K562 (cell line): ENCODE measurements at regions of chr6 and their contacts with region 1.

Region 1: DNA sequence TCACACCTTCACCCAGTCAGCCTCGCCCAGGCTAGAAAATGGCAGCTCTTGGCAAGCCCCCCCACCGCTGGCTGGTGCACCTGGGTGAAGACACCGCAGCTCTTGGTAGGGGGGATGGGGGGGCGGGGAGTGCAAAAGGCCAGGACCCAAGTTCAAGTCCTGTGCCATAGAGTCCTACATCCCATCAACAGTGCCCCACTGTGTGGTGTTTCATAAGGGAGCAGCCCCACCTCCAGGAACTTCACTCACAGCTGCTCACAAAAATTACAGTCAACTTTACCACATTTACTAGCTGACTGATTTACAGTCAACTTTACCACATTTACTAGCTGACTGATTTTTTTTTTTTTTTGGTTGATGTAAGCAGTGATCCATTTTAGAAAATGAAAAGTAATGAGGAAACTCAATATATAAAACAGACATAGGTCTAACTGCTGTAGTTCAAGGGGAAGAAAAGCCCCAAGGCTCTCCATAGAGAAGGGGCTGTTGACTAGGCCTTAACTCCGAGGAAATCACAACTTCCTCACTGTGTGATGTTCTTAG is 208.9 kb upstream of the SNX9 start:
- DNase-seq: no peak
- ATAC-seq: peak; percentile 65
- H3K4me3 ChIP-seq: no peak overlapping the region
- H3K27ac ChIP-seq: no peak overlapping the region
- H3K4me1 ChIP-seq: peaks cover 7 to 18% of the 10 kb centered on the region in 2 experiments; a peak in 4 of 5 replicates
- H3K27me3 ChIP-seq: no peaks in the 10 kb centered on the region
- CTCF ChIP-seq: peak; percentile 11 to 43 (median 31); a peak in 3 of 6 replicates
- EP300 ChIP-seq: no peak
- POLR2A ChIP-seq: no peak
- RAD21 ChIP-seq: peak; percentile 36 to 47; a peak in 3 of 4 replicates

Region 2: DNA sequence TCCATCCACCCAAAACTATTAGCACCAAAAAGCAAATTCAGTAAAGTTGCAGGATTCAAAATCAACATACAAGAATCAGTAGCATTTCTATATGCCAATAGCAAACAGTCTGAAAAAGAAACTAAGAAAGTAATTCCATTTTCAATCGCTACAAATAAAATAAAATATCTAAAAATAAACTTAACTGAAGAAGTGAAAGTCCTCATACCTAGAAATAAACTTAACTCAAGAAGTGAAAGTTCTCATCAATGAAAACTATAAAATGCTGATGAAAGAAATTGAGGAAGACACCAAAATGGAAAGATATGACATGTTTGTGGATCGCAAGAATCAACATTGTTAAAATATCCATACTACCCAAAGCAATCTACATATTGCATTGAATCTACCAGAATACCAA is 939.9 kb before region 1 on chr6:
- CTCF ChIA-PET with region 1: no interaction called
- POLR2A ChIA-PET with region 1: no interaction called
- in situ Hi-C with region 1: no loop called
- intact Hi-C with region 1: no loop called
- DNase-seq: no peak
- ATAC-seq: no peak
- H3K4me3 ChIP-seq: no peak overlapping the region
- H3K27ac ChIP-seq: no peak overlapping the region
- H3K4me1 ChIP-seq: no peaks in the 10 kb centered on the region
- H3K27me3 ChIP-seq: peaks cover 9 to 19% of the 10 kb centered on the region in 2 experiments; a peak in 3 of 5 replicates
- CTCF ChIP-seq: no peak
- EP300 ChIP-seq: no peak
- POLR2A ChIP-seq: no peak
- RAD21 ChIP-seq: no peak

Region 3: GRCh38 chr6:157323255-157323965 is 290.7 kb before region 1 on chr6 and contains the start of gene TMEM242:
- CTCF ChIA-PET with region 1: no interaction called
- POLR2A ChIA-PET with region 1: interaction called, 5 read pairs
- in situ Hi-C with region 1: no loop called
- intact Hi-C with region 1: loop called (anchors 5 kb)
- DNase-seq: peak; percentile 87 to 97 (median 90)
- ATAC-seq: peak; percentile 92
- H3K4me3 ChIP-seq: peak within 1 kb of the TSS; percentile 66
- H3K27ac ChIP-seq: peak within 1 kb of the TSS; percentile 85
- H3K4me1 ChIP-seq: peaks cover 8 to 19% of the 10 kb centered on the region in 2 experiments
- H3K27me3 ChIP-seq: no peaks in the 10 kb centered on the region
- CTCF ChIP-seq: no peak
- EP300 ChIP-seq: peak; percentile 61
- POLR2A ChIP-seq: peak; percentile 100
- RAD21 ChIP-seq: peak in 1 of 2 experiments; percentile 44; a peak in 3 of 4 replicates
- polyA plus RNA-seq, gene TMEM242: 24.3 to 35.3 TPM

Region 4: GRCh38 chr6:157554747-157555146 is 59.4 kb before region 1 on chr6:
- CTCF ChIA-PET with region 1: no interaction called
- POLR2A ChIA-PET with region 1: no interaction called
- in situ Hi-C with region 1: no loop called
- intact Hi-C with region 1: no loop called
- DNase-seq: no peak
- ATAC-seq: no peak
- H3K4me3 ChIP-seq: no peak overlapping the region
- H3K27ac ChIP-seq: no peak overlapping the region
- H3K4me1 ChIP-seq: peaks cover 0 to 7% of the 10 kb centered on the region in 2 experiments; a peak in 1 of 5 replicates
- H3K27me3 ChIP-seq: no peaks in the 10 kb centered on the region
- CTCF ChIP-seq: no peak
- EP300 ChIP-seq: no peak
- POLR2A ChIP-seq: no peak
- RAD21 ChIP-seq: no peak

Region 5: DNA sequence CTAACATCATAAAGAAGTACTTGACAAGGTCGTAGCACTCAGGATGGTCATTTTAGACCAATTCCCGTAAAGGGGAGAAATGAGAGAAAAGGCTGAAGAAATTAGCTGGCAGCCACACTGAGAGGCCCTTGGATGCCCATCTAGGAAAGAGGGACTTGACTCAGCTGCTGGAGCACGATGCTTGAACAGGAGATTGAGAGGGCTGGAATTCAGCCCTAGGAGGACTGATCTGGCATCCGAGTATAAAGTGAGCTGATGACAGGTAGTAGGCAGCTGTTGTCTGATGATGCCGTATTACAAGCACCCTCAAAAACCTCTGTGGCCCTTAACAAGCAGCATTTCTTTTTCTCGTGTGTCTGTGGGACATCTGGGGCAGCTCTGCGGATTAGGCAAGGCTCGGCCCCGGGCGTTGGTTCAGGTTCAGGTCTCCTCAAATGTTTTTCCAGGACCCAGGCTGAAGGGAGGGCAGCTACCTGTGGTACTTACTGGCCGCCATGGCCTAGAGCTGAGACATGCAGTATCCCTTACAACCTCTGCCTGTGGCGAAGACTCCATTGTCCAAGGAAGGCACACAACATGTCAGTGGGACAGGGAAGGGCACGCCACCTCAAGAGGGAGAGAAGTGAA is 10.7 kb before region 1 on chr6:
- CTCF ChIA-PET with region 1: no interaction called
- POLR2A ChIA-PET with region 1: interaction called, 11 read pairs
- in situ Hi-C with region 1: no loop called
- intact Hi-C with region 1: no loop called
- DNase-seq: no peak
- ATAC-seq: no peak
- H3K4me3 ChIP-seq: no peak overlapping the region
- H3K27ac ChIP-seq: no peak overlapping the region
- H3K4me1 ChIP-seq: no peaks in the 10 kb centered on the region
- H3K27me3 ChIP-seq: no peaks in the 10 kb centered on the region
- CTCF ChIP-seq: no peak
- EP300 ChIP-seq: no peak
- POLR2A ChIP-seq: no peak
- RAD21 ChIP-seq: no peak

Region 6: DNA sequence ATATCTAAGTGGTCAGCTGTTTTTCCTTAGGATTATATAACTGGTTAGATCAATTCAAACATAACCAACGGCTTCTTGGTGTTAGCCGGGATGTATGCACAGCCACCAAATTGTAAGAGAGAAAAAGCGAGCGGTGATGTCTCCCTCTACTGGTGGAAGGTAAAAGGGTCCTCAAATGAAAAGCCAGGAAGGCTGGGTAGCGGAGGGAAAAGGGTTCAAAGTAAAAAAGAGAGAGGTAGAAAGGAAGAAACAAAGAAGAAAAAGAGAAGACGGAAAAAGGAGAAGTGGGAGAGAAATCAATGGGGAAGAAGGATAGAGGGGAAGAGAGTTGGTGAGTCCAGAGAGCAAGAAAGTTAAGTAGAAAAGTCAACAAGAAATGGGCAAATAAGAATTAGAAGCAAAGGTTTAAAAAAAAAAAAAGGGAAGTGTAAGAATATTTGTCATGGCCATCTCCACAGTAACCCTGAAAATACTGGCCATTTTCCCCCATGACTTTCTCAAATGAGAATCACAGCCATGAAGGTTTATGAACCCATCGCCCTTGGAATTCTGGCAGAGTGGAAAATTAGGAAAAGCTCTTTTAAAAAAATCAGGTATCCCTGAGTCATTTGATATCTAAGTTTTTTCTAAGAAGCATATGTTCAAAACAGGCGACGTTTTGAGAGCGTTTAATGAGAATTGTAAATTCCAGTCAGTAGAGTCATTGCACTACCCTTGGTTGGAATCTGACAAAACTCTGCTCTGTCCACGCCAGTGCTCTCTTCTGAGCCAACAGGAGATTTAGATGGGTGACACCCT is 53.3 kb after region 1 on chr6:
- CTCF ChIA-PET with region 1: interaction called, 3 read pairs
- POLR2A ChIA-PET with region 1: interaction called, 3 read pairs
- in situ Hi-C with region 1: no loop called
- intact Hi-C with region 1: loop called (anchors 2 kb)
- DNase-seq: peak; percentile 82 to 83 (median 82)
- ATAC-seq: peak; percentile 95
- H3K4me3 ChIP-seq: no peak overlapping the region
- H3K27ac ChIP-seq: no peak overlapping the region
- H3K4me1 ChIP-seq: peaks cover 2 to 4% of the 10 kb centered on the region in 2 experiments; a peak in 1 of 5 replicates
- H3K27me3 ChIP-seq: no peaks in the 10 kb centered on the region
- CTCF ChIP-seq: peak; percentile 89 to 93 (median 91)
- EP300 ChIP-seq: no peak
- POLR2A ChIP-seq: no peak
- RAD21 ChIP-seq: peak; percentile 91 to 93